Thyroid gland (tissue), 4 donors: ENCODE measurements at regions of chr1 and their contacts with region 1.

Region 1: DNA sequence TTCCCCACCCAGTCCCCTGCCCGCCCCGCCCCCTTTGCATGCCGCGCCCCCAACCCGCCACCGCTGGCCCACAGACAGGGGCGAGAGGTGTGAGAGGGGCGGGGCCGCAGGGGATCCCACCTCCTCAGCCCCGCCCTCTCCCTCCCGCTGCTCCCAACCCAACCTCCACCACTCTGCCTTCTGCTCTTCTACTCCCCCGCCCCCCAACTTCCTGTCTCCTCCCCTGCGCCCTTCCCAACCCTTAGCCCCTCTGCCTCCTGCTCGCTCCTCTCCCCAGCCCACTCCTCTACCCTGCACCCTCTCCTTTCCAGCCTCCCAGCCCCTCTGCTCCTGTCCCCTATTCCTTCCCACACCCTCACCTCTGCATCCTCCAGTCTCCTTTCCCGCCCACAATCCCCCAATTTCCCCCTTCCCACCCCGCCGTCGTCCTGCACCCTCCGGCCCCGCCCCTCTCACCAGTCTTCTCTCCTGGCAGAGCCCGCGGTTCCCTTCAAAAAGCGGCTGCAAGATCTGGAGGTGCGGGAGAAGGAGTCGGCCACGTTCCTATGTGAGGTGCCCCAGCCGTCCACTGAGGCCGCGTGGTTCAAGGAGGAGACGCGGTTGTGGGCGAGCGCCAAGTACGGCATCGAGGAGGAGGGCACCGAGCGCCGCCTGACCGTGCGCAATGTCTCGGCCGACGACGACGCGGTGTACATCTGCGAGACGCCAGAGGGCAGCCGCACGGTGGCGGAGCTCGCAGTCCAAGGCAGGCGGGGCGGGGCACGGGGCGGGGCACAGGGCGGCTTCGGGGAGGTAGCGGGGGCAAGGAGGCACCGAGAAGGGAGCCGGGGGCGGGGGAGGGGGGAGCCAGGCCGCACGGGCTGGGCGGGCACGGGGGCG is 5.4 kb downstream of the OBSCN start:
- DNase-seq: peak; percentile 93
- H3K4me3 ChIP-seq: peak overlapping the region; percentile 53 to 65 (median 56)
- H3K27ac ChIP-seq: peak overlapping the region in 2 of 3 donors; percentile 23 to 80
- H3K4me1 ChIP-seq: peaks cover 4 to 14% of the 10 kb centered on the region in 2 donors
- H3K27me3 ChIP-seq: no peaks in the 10 kb centered on the region
- CTCF ChIP-seq: peak; percentile 23 to 72 (median 40)
- POLR2A ChIP-seq: peak in 1 of 2 donors; percentile 49

Region 2: GRCh38 chr1:228059634-228060457 is 153.4 kb before region 1 on chr1:
- intact Hi-C with region 1: no loop called
- DNase-seq: peak; percentile 29 to 54
- H3K4me3 ChIP-seq: no peak overlapping the region
- H3K27ac ChIP-seq: no peak overlapping the region
- H3K4me1 ChIP-seq: peaks cover 0 to 20% of the 10 kb centered on the region in 2 donors
- H3K27me3 ChIP-seq: peaks cover 8% of the 10 kb centered on the region
- CTCF ChIP-seq: no peak
- POLR2A ChIP-seq: no peak

Region 3: GRCh38 chr1:228139944-228140656 is 73.1 kb before region 1 on chr1 and contains the start of gene GUK1:
- intact Hi-C with region 1: loop called (anchors 10 kb)
- DNase-seq: peak; percentile 100
- H3K4me3 ChIP-seq: peak within 1 kb of the TSS; percentile 82 to 98 (median 96)
- H3K27ac ChIP-seq: peak within 1 kb of the TSS; percentile 82 to 97 (median 90)
- H3K4me1 ChIP-seq: peaks cover 23 to 36% of the 10 kb centered on the region in 2 donors
- H3K27me3 ChIP-seq: no peaks in the 10 kb centered on the region
- CTCF ChIP-seq: peak in 4 of 6 experiments; percentile 16 to 44 (median 24)
- POLR2A ChIP-seq: peak; percentile 86 to 92
- total RNA-seq, gene GUK1: 157 to 385 (median 283) TPM

Region 4: DNA sequence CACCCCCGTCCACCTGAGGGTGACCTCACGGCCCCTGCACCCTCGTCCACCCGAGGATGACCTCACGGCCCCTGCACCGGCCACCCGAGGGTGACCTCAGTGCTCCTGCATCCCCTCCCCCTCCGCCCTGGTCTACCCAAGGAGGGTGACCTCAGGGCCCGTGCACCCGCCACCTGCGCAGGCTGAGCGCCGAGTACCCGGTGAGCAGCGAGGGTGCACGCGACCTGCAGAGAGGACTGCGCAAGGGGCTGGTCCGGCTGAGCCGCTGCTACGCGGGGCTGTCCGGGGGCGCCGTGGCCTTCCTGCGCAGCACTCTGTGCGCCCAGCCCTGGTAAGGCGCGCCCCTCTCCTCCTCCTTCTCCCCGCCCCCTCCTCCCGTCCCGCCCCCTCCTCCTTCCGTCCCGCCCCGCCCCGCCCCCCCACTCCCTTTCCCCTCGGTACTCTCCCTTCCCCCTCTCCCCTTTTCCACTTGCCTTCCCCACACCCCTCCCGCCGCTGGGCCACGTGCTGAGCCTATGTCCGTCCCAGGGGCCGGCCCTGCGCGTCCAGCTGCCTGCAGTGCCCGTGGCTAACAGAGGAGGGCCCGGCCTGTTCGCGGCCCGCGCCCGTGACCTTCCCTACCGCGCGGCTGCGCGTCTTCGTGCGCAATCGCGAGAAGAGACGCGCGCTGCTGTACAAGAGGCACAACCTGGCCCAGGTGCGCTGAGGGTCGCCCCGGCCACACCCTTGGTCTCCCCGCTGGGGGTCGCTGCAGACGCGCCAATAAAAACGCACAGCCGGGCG is 165.1 kb after region 1 on chr1:
- intact Hi-C with region 1: loop called (anchors 10 kb)
- DNase-seq: peak; percentile 87
- H3K4me3 ChIP-seq: peak overlapping the region in 2 of 3 donors; percentile 44 to 52
- H3K27ac ChIP-seq: peak overlapping the region; percentile 74 to 82 (median 78)
- H3K4me1 ChIP-seq: peaks cover 16 to 35% of the 10 kb centered on the region in 2 donors
- H3K27me3 ChIP-seq: no peaks in the 10 kb centered on the region
- CTCF ChIP-seq: peak in 5 of 6 experiments; percentile 26 to 77 (median 60)
- POLR2A ChIP-seq: peak in 1 of 2 donors; percentile 71